ENCODE measurements at regions of chr7 and their contacts with region 1.

Region 1: GRCh38 chr7:30173058-30173897 is 38.5 kb downstream of the MTURN start:
- DNase-seq: peak; percentile 75 to 97 (median 94)
- H3K4me3 ChIP-seq: peak overlapping the region in 36 of 59 donors; percentile 3 to 48 (median 16)
- H3K27ac ChIP-seq: peak overlapping the region; percentile 63 to 98 (median 91)
- H3K27me3 ChIP-seq: no peaks in the 10 kb centered on the region
- CTCF ChIP-seq: peak in 52 of 56 donors; percentile 19 to 70 (median 49)

Region 2: DNA sequence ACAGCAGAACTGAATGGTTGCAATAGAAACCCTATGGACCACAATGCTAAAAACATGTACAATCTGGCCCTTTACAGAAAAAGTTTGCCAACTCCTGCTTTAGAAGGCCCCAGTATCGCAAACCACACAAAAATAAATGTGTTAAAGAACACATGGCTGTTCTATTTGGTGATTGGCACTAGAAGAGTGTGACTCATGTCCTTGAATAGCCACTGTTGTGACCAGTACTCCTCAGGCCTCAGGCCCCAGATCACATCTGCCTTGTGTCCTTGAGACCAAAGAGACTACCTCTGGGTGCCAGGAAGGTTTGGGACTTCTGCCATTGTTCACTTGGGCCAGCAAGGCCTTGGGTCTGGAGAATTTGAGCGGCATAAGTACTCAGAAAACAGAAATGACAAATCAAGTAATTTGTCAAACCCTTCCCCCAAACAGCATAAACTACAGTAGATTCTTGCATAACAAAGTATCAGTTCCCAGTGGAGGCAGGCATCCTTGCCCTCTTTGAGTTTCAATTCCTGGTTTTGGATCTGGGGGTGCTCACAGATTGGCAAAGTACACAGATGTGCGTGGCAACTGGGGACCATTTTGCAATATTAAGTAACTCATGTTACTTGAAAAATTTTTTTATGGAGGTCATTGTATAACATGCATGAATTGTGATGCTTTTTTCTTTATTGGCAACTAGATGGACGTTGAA is 11.7 kb after region 1 on chr7:
- intact Hi-C with region 1: loop called in 1 of 2 experiments (anchors 1 kb)
- DNase-seq: peak in 2 of 10 donors; percentile 56 to 62
- H3K4me3 ChIP-seq: no peak overlapping the region
- H3K27ac ChIP-seq: peak overlapping the region; percentile 15 to 94 (median 84)
- H3K27me3 ChIP-seq: no peaks in the 10 kb centered on the region
- CTCF ChIP-seq: peak in 2 of 56 donors; percentile 6 to 11

Region 3: DNA sequence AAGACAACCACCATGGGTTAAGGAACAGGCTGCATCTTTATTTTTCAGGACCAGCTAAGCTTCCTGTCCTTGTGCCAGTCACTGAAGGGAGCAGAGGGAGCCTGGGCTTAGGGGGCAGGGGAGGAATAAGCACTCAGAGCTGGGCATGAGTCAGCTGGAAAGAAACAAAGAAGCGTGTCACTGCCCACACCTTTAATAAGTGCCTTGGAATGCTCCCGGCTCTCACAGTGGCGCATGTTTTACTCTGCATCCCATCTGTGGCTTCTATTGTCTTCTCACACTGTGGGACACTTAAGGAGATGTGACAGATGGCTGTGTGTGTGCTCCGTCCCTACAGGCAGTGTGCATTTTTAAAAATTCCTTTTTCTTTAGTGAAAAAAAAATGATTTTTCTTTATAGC is 33.2 kb after region 1 on chr7:
- intact Hi-C with region 1: loop called (anchors 2 to 5 kb)
- DNase-seq: peak in 5 of 10 donors; percentile 42 to 63 (median 44)
- H3K4me3 ChIP-seq: no peak overlapping the region
- H3K27ac ChIP-seq: peak overlapping the region in 2 of 59 donors; percentile 1 to 51
- H3K27me3 ChIP-seq: no peaks in the 10 kb centered on the region
- CTCF ChIP-seq: no peak

Region 4: DNA sequence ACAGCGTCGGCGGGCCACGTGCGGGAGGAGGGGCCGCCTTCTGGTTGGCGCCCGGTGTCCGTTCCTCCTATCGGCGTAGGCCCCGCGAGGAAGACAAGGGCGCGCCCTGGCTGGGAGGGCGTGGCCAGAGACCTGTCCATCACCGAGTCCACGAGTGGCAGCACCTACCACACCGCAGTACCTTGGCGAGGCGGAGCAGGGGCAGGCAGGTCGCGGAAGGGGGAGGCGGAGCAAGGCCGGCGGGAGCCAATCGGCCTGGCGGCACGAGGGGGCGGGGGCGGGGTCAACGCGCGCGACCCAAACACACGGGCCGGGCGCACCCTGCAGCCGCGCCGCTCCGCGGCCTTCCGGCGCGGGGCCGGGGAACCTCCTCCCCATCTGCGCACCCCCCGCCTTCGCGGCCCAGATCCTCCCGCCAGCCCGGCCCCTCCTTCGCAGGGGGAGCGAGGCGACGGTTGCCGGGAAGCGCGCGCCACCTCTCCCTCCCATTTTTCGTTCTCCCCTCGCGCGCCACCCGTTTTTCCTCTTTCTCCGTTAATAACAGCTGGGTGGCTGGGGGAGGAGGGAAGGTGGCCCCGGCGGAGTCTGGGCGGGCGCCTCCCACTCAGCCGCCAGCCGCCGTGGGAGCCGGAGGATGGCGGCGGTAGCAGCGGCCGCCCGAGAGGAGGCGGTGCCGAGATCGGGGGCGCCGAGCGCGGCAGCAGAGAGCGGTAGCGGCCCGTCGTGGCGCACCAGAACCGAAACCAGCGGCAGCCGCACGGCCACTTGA is 111.2 kb after region 1 on chr7 and contains the start of gene ZNRF2:
- intact Hi-C with region 1: loop called (anchors 2 to 5 kb)
- DNase-seq: peak; percentile 82 to 99 (median 95)
- H3K4me3 ChIP-seq: peak within 1 kb of the TSS; percentile 36 to 92 (median 77)
- H3K27ac ChIP-seq: peak within 1 kb of the TSS; percentile 63 to 99 (median 95)
- H3K27me3 ChIP-seq: no peaks in the 10 kb centered on the region
- CTCF ChIP-seq: peak in 51 of 56 donors; percentile 13 to 65 (median 43)
- total RNA-seq, gene ZNRF2: 11.4 to 24.8 (median 16.7) TPM

Region 5: GRCh38 chr7:30412810-30413504 is 239.7 kb after region 1 on chr7:
- intact Hi-C with region 1: loop called in 1 of 2 experiments (anchors 5 kb)
- DNase-seq: peak in 1 of 10 donors; percentile 18
- H3K4me3 ChIP-seq: no peak overlapping the region
- H3K27ac ChIP-seq: peak overlapping the region in 10 of 59 donors; percentile 8 to 46 (median 28)
- H3K27me3 ChIP-seq: no peaks in the 10 kb centered on the region
- CTCF ChIP-seq: peak; percentile 44 to 80 (median 66)

Region 6: GRCh38 chr7:30504347-30505173 is 331.3 kb after region 1 on chr7 and contains the start of gene GGCT:
- intact Hi-C with region 1: loop called (anchors 5 to 10 kb)
- DNase-seq: peak; percentile 99 to 100 (median 100)
- H3K4me3 ChIP-seq: peak within 1 kb of the TSS; percentile 64 to 99 (median 91)
- H3K27ac ChIP-seq: peak within 1 kb of the TSS in 56 of 59 donors; percentile 1 to 94 (median 79)
- H3K27me3 ChIP-seq: no peaks in the 10 kb centered on the region
- CTCF ChIP-seq: peak in 23 of 56 donors; percentile 3 to 52 (median 27)
- total RNA-seq, gene GGCT: 14.1 to 56.5 (median 30.5) TPM